Activated naive CD4-positive, alpha-beta T cell treated with anti-CD3 and anti-CD28 coated beads for 36 hours (primary cell): ENCODE measurements at regions of chr5 and their contacts with region 1.

Region 1: GRCh38 chr5:44862808-44863207 is 54.1 kb downstream of the MRPS30 start:
- DNase-seq: no peak
- H3K4me3 Mint-ChIP-seq: no peak overlapping the region
- H3K27ac Mint-ChIP-seq: no peak overlapping the region
- H3K4me1 Mint-ChIP-seq: no peaks in the 10 kb centered on the region
- H3K27me3 Mint-ChIP-seq: peaks cover 10% of the 10 kb centered on the region

Region 2: GRCh38 chr5:44632344-44632743 is 230.5 kb before region 1 on chr5:
- CTCF ChIA-PET with region 1: no interaction called
- intact Hi-C with region 1: no loop called
- DNase-seq: no peak
- H3K4me3 Mint-ChIP-seq: no peak overlapping the region
- H3K27ac Mint-ChIP-seq: no peak overlapping the region
- H3K4me1 Mint-ChIP-seq: no peaks in the 10 kb centered on the region
- H3K27me3 Mint-ChIP-seq: no peaks in the 10 kb centered on the region

Region 3: DNA sequence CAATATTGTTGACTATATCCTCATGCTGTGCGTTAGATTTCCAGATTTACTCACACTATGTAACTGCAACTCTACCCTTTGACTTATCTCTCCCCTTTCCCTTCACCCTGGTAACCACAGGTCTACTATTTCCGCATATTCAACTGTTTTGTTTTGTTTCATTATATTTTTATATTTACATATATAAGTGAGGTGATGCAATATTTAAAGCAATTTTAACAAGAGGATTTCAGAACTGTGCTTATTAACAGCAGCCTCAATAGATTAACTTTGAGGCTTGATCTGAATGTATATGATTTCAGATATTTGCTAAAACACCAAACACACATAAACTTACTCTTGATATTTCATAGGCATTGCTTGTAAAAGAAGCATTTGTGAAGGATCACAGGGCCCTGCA is 113.0 kb before region 1 on chr5:
- CTCF ChIA-PET with region 1: no interaction called
- intact Hi-C with region 1: no loop called
- DNase-seq: no peak
- H3K4me3 Mint-ChIP-seq: no peak overlapping the region
- H3K27ac Mint-ChIP-seq: no peak overlapping the region
- H3K4me1 Mint-ChIP-seq: no peaks in the 10 kb centered on the region
- H3K27me3 Mint-ChIP-seq: peaks cover 5% of the 10 kb centered on the region

Region 4: GRCh38 chr5:44891116-44891515 is 28.3 kb after region 1 on chr5:
- CTCF ChIA-PET with region 1: no interaction called
- intact Hi-C with region 1: no loop called
- DNase-seq: no peak
- H3K4me3 Mint-ChIP-seq: no peak overlapping the region
- H3K27ac Mint-ChIP-seq: no peak overlapping the region
- H3K4me1 Mint-ChIP-seq: no peaks in the 10 kb centered on the region
- H3K27me3 Mint-ChIP-seq: peaks cover 6% of the 10 kb centered on the region

Region 5: GRCh38 chr5:44952376-44952775 is 89.6 kb after region 1 on chr5:
- CTCF ChIA-PET with region 1: no interaction called
- intact Hi-C with region 1: loop called (anchors 5 kb)
- DNase-seq: peak; percentile 5
- H3K4me3 Mint-ChIP-seq: no peak overlapping the region
- H3K27ac Mint-ChIP-seq: no peak overlapping the region
- H3K4me1 Mint-ChIP-seq: peaks cover 4% of the 10 kb centered on the region
- H3K27me3 Mint-ChIP-seq: no peaks in the 10 kb centered on the region

Region 6: DNA sequence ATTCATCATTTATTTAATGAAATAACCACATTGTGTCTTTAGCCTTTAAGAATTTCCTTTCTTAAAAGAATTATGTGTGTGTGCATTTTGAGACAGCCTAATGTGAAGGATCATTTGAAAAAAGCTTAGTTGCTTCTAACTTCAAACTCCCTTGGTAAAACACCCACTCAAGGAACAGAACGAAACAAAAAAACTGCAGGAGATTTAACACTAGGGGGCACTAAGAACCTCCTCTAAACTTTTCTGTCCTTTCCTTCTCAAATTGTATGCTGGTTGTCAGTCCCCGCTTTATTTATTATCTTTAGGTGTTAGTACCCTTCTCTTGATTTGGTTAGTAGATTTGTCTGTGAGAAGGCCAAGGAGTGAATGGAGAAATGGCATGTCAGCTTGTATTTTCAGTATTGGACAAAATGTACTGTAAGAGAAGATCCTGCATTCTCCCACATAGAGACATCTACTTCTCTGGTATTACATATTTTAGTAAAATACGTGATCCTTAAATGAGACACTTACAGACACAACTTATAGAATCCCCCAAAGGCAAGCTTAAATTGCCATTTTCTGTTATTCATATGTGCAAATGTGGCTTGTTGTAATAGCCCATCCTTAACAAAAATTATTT is 175.7 kb after region 1 on chr5:
- CTCF ChIA-PET with region 1: interaction called, 4 read pairs
- intact Hi-C with region 1: loop called (anchors 10 kb)
- DNase-seq: no peak
- H3K4me3 Mint-ChIP-seq: no peak overlapping the region
- H3K27ac Mint-ChIP-seq: no peak overlapping the region
- H3K4me1 Mint-ChIP-seq: no peaks in the 10 kb centered on the region
- H3K27me3 Mint-ChIP-seq: no peaks in the 10 kb centered on the region

Region 7: GRCh38 chr5:45696206-45696836 is 833.5 kb after region 1 on chr5 and contains the start of gene HCN1:
- CTCF ChIA-PET with region 1: no interaction called
- intact Hi-C with region 1: loop called (anchors 2 kb)
- DNase-seq: peak; percentile 60
- H3K4me3 Mint-ChIP-seq: no peak within 1 kb of the TSS
- H3K27ac Mint-ChIP-seq: no peak within 1 kb of the TSS
- H3K4me1 Mint-ChIP-seq: peaks cover 5% of the 10 kb centered on the region
- H3K27me3 Mint-ChIP-seq: peaks cover 33% of the 10 kb centered on the region
- total RNA-seq, gene HCN1: not detected

Region 8: GRCh38 chr5:45774528-45774927 is 911.7 kb after region 1 on chr5:
- CTCF ChIA-PET with region 1: no interaction called
- intact Hi-C with region 1: loop called (anchors 10 kb)
- DNase-seq: no peak
- H3K4me3 Mint-ChIP-seq: no peak overlapping the region
- H3K27ac Mint-ChIP-seq: no peak overlapping the region
- H3K4me1 Mint-ChIP-seq: no peaks in the 10 kb centered on the region
- H3K27me3 Mint-ChIP-seq: no peaks in the 10 kb centered on the region